Posterior cingulate gyrus (tissue), 11 donors: ENCODE measurements at regions of chr12 and their contacts with region 1.

Region 1: GRCh38 chr12:80622271-80622670 is 85.2 kb upstream of the MYF6 start:
- DNase-seq: no peak

Region 2: DNA sequence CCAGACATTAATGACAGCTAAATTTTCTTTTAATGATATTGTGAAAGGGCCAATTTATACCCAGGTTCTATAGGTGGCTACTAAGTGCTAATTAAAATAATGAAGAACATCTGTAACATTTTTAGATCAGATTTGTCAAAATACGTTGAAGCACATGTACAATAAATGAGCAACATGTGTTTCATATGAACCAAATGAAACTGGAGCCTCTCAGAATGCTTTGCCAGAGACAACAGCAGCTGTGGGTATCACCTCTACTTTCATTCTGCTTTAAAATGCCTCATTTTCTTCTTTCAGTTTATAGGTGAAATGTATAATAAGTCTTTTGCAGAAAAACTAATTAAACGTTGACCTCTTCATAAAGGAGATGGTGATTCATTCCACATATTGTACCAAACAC is 59.0 kb after region 1 on chr12:
- intact Hi-C with region 1: loop called (anchors 10 kb)
- DNase-seq: no peak